ENCODE measurements at regions of chr18 and their contacts with region 1.

Region 1: DNA sequence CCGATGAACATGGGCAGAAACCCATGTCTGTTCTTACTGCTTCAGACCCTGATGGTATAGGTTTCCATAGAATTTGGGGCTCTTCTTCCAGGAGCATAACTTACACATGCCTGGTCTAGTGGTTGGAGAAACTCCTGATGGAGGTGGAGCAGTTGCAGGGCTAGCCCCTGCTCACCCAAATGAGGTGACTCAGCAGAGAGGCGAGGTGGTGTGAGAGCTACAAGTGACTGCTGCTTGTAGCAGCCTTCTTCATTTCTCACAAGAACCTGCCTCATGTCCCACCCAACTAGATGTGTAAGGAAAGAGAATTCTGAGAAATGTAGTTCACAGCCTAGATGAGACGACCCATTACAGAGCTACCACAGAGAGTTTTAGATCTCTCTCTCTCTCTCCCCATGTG is 105.3 kb downstream of the ZNF407 start:
- DNase-seq: no peak
- ATAC-seq: no peak
- H3K4me3 ChIP-seq: no peak overlapping the region
- H3K27ac ChIP-seq: no peak overlapping the region
- H3K4me1 ChIP-seq: peaks cover 43% of the 10 kb centered on the region
- H3K27me3 ChIP-seq: no peaks in the 10 kb centered on the region
- CTCF ChIP-seq: no peak
- EP300 ChIP-seq: no peak
- POLR2A ChIP-seq: no peak
- RAD21 ChIP-seq: no peak

Region 2: DNA sequence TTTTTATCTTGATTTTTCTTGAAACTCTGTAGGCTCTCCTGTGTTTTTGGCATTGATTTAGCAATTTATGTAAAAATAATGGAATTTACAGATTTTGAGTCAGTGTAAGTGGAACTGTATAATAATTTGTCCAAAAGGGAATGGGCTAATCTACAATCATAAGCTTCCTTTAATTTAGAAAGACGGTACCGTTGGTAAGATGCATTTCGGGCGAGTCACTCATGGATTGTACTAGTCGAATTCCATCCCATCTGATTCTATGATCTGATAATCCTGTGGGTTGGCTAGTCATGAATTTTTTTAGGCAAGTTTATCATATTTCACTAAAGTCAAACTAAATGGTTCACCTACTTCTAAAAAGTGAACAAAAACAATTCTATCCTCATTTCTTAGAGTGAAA is 28.1 kb after region 1 on chr18:
- CTCF ChIA-PET with region 1: no interaction called
- POLR2A ChIA-PET with region 1: no interaction called
- in situ Hi-C with region 1: no loop called
- intact Hi-C with region 1: loop called (anchors 2 kb)
- DNase-seq: no peak
- ATAC-seq: no peak
- H3K4me3 ChIP-seq: no peak overlapping the region
- H3K27ac ChIP-seq: no peak overlapping the region
- H3K4me1 ChIP-seq: peaks cover 47% of the 10 kb centered on the region
- H3K27me3 ChIP-seq: no peaks in the 10 kb centered on the region
- CTCF ChIP-seq: no peak
- EP300 ChIP-seq: no peak
- POLR2A ChIP-seq: no peak
- RAD21 ChIP-seq: no peak